GM12878 (cell line): ENCODE measurements at regions of chr14 and their contacts with region 1.

Region 1: DNA sequence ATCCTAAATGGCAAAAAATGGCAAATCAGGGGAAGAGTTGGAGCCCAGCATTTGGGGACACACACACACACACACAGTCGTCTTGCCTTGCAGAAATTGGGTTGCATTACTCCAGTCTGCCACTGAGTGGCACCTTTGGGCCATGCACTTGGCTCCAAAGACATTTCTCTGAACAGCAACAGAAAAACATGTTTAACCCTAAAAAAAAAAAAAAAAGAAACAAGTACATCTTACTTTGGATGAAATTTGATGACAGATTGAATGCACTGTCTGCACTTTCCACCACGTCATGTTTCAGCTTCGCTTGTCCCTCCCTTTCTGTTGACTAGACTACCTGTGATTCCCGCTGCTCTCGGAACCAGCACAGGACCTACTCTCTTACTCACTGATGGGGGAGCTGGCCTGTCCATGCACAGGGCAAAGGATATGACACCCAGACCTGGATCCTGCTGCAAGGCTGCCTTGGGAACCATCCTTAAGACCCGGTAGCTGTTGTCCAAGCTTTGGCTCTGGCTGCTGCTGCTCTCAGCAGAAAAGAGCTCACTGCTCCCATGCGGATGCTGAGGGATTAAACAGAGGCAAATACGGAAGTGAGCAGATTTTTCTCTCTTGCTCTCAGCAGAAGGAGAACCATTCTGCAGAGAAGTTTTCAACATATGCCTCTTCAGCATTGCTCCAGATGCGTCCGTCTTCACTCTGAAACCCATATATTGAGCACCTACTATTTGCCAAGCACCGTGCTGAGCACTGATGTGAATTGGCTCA is 376.8 kb downstream of the DPF3 start:
- DNase-seq: peak; percentile 53
- ATAC-seq: peak; percentile 46
- H3K4me3 ChIP-seq: no peak overlapping the region
- H3K27ac ChIP-seq: peak overlapping the region; percentile 86; the same call in 1 of the 2 replicates
- H3K4me1 ChIP-seq: peaks cover 56% of the 10 kb centered on the region
- H3K27me3 ChIP-seq: no peaks in the 10 kb centered on the region
- CTCF ChIP-seq: peak; percentile 86 to 95 (median 93)
- EP300 ChIP-seq: no peak
- POLR2A ChIP-seq: no peak
- RAD21 ChIP-seq: peak; percentile 97

Region 2: DNA sequence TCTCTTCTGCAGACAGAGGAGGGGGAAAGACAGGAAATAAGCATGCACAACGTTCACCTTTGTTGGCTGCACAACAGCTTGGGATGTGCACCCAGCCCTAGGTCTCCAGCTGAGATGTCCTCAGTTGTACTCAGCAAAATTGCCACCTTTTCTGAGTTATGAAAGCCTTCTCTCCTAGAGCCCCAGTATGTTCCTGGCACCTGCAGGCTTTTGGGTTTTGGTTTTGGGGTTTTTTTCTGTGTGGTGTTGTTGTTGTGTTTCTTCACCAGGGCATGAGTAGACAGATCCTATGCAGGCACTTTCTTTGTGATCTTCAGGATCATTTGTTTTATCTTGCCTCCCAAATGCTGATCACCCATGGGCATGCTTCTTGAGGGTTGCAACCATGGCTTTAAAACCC is 86.7 kb before region 1 on chr14:
- CTCF ChIA-PET with region 1: no interaction called
- POLR2A ChIA-PET with region 1: no interaction called
- RAD21 ChIA-PET with region 1: no interaction called
- SMC1A ChIA-PET with region 1: no interaction called
- in situ Hi-C with region 1: no loop called
- intact Hi-C with region 1: no loop called
- DNase-seq: no peak
- ATAC-seq: no peak
- H3K4me3 ChIP-seq: no peak overlapping the region
- H3K27ac ChIP-seq: no peak overlapping the region
- H3K4me1 ChIP-seq: no peaks in the 10 kb centered on the region
- H3K27me3 ChIP-seq: no peaks in the 10 kb centered on the region
- CTCF ChIP-seq: no peak
- EP300 ChIP-seq: no peak
- POLR2A ChIP-seq: no peak
- RAD21 ChIP-seq: no peak

Region 3: GRCh38 chr14:72495664-72496264 is 21.4 kb before region 1 on chr14:
- CTCF ChIA-PET with region 1: interaction called, 35 read pairs
- POLR2A ChIA-PET with region 1: no interaction called
- RAD21 ChIA-PET with region 1: interaction called, 3 read pairs
- SMC1A ChIA-PET with region 1: interaction called, 9 read pairs
- in situ Hi-C with region 1: no loop called
- intact Hi-C with region 1: no loop called
- DNase-seq: no peak
- ATAC-seq: no peak
- H3K4me3 ChIP-seq: no peak overlapping the region
- H3K27ac ChIP-seq: no peak overlapping the region
- H3K4me1 ChIP-seq: peaks cover 5% of the 10 kb centered on the region; the same call in 1 of the 2 replicates
- H3K27me3 ChIP-seq: no peaks in the 10 kb centered on the region
- CTCF ChIP-seq: no peak
- EP300 ChIP-seq: no peak
- POLR2A ChIP-seq: no peak
- RAD21 ChIP-seq: no peak

Region 4: GRCh38 chr14:72638021-72638420 is 120.9 kb after region 1 on chr14:
- CTCF ChIA-PET with region 1: no interaction called
- POLR2A ChIA-PET with region 1: no interaction called
- RAD21 ChIA-PET with region 1: interaction called, 5 read pairs
- SMC1A ChIA-PET with region 1: interaction called, 10 read pairs
- in situ Hi-C with region 1: no loop called
- intact Hi-C with region 1: loop called (anchors 2 kb)
- DNase-seq: no peak
- ATAC-seq: no peak
- H3K4me3 ChIP-seq: no peak overlapping the region
- H3K27ac ChIP-seq: no peak overlapping the region
- H3K4me1 ChIP-seq: peaks cover 5% of the 10 kb centered on the region
- H3K27me3 ChIP-seq: peaks cover 0 to 2% of the 10 kb centered on the region in 2 experiments; a peak in 1 of 4 replicates
- CTCF ChIP-seq: no peak
- EP300 ChIP-seq: no peak
- POLR2A ChIP-seq: no peak
- RAD21 ChIP-seq: no peak

Region 5: DNA sequence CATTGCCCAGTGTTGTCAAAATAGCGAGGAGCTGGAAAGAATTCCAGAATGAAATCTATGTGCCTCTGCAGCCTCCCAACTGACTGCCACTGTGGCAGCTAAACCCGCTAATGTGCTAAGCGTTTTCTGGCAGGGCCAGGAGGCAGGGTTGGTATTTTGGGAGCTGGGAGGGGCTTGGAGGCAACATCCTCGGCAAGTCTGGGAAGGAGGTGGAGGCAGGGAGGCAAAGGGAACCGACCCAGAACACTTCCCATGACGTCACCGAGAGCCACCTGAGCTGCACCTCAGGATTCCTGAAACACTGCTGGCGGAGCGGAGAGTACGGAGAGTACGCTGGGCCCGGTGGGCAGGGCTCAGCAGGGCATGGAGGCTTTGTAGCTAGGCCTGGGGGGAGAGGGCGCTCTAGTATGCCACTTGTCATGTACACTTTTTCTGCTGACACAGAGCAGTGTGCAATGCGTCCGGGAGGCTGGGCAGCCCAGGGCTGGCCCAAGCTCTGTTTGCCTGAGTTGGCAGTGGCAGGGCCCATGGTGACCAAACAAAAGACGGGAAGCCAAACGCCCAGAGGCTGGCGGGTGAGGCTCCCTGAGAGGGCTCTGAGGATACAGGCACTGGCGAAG is 295.3 kb after region 1 on chr14:
- CTCF ChIA-PET with region 1: interaction called, 3 read pairs
- POLR2A ChIA-PET with region 1: no interaction called
- RAD21 ChIA-PET with region 1: interaction called, 3 read pairs
- SMC1A ChIA-PET with region 1: no interaction called
- in situ Hi-C with region 1: no loop called
- intact Hi-C with region 1: loop called (anchors 10 kb)
- DNase-seq: no peak
- ATAC-seq: no peak
- H3K4me3 ChIP-seq: no peak overlapping the region
- H3K27ac ChIP-seq: no peak overlapping the region
- H3K4me1 ChIP-seq: peaks cover 6% of the 10 kb centered on the region
- H3K27me3 ChIP-seq: no peaks in the 10 kb centered on the region
- CTCF ChIP-seq: no peak
- EP300 ChIP-seq: no peak
- POLR2A ChIP-seq: no peak
- RAD21 ChIP-seq: no peak

Region 6: GRCh38 chr14:72836085-72836484 is 319.0 kb after region 1 on chr14:
- CTCF ChIA-PET with region 1: no interaction called
- POLR2A ChIA-PET with region 1: no interaction called
- RAD21 ChIA-PET with region 1: no interaction called
- SMC1A ChIA-PET with region 1: no interaction called
- in situ Hi-C with region 1: no loop called
- intact Hi-C with region 1: no loop called
- DNase-seq: no peak
- ATAC-seq: no peak
- H3K4me3 ChIP-seq: no peak overlapping the region
- H3K27ac ChIP-seq: no peak overlapping the region
- H3K4me1 ChIP-seq: no peaks in the 10 kb centered on the region
- H3K27me3 ChIP-seq: no peaks in the 10 kb centered on the region
- CTCF ChIP-seq: no peak
- EP300 ChIP-seq: no peak
- POLR2A ChIP-seq: no peak
- RAD21 ChIP-seq: no peak

Region 7: DNA sequence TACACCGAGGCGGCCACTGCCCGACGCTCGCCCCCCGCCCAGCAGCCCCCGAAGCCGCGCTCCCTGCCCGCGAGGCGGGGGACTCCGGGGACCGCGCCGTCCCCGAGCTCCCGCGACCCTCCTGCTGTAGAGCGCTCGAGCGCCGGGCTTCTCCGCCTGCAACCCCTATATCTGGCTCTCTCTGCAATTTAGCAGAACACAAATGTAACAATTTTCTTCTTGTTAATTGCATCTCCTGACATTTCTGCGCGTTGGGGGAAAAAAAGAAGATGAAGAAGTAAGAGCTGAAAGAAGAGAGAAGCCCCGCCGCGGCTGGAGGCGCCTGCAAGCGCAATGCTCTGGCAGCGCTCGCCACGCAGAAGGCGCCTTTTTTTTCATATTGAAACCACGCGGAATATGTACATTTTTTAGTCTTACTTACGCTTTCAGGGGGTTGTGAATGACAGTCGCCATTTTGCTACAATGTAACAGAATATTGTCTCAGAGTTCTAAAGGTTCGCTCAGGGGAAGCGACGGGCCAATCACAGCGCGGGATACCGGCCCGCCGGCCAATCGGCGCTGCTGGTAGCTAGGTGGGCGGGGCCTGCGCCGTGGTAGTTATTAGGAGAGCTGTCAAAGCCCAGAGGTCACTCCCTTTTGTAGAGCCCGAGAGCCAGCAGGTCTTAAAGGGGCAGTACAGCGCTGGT is 376.7 kb after region 1 on chr14 and contains the start of gene DPF3:
- CTCF ChIA-PET with region 1: interaction called, 520 read pairs
- POLR2A ChIA-PET with region 1: no interaction called
- RAD21 ChIA-PET with region 1: interaction called, 31 read pairs
- SMC1A ChIA-PET with region 1: interaction called, 18 read pairs
- in situ Hi-C with region 1: no loop called
- intact Hi-C with region 1: no loop called
- DNase-seq: peak; percentile 75
- ATAC-seq: peak; percentile 99
- H3K4me3 ChIP-seq: peak within 1 kb of the TSS; percentile 98
- H3K27ac ChIP-seq: no peak within 1 kb of the TSS
- H3K4me1 ChIP-seq: peaks cover 5% of the 10 kb centered on the region; the same call in 1 of the 2 replicates
- H3K27me3 ChIP-seq: no peaks in the 10 kb centered on the region
- CTCF ChIP-seq: no peak
- EP300 ChIP-seq: no peak
- POLR2A ChIP-seq: no peak
- RAD21 ChIP-seq: 0 out of 2 replicates have a peak, but pooled peaks have one; percentile 3
- polyA plus RNA-seq, gene DPF3: 0.69 to 0.87 TPM

Region 8: DNA sequence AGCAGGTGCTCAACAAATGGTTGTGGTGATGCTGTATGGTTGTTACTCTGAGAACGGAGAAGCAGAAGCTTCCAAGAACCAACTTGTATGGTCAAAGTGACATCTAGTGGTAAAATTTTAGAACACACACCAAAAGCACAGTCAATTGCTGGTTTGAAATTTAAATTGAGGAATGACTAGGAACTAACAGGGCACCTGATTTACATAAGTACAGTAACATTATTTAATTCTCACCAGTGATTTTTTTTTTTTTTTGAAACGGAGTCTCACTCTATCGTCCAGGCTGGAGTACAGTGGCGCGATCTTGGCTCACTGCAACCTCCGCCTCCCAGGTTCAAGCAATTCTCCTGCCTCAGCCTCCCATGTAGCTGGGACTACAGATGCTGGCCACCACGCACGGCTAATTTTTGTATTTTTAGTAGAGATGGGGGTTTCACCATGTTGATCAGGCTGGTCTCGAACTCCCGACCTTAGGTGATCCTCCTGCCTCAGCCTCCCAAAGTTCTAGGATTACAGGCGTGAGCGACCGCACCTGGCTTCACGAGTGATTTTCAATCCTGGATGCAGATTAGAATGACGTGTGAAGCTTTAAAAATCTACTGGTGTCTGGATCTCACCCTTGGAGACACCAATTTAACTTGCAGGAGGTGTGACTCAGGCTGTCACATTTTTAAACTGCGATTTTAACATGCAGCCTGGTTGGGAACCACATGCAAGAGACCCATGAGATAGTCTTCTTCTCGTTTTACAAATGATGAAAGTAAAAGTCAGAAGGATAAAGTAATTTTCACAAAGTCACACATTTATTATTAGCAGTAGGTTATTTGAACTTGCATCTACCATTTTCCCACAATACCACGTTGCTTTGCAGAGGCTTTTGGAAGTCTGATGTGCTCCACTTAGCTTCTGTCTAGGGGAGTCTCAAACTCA is 955.3 kb after region 1 on chr14:
- CTCF ChIA-PET with region 1: interaction called, 8 read pairs
- POLR2A ChIA-PET with region 1: no interaction called
- RAD21 ChIA-PET with region 1: interaction called, 8 read pairs
- SMC1A ChIA-PET with region 1: interaction called, 3 read pairs
- in situ Hi-C with region 1: loop called (anchors 10 kb)
- intact Hi-C with region 1: no loop called
- DNase-seq: peak; percentile 57
- ATAC-seq: peak; percentile 86
- H3K4me3 ChIP-seq: no peak overlapping the region
- H3K27ac ChIP-seq: peak overlapping the region; percentile 29; the same call in 1 of the 2 replicates
- H3K4me1 ChIP-seq: peaks cover 15% of the 10 kb centered on the region
- H3K27me3 ChIP-seq: no peaks in the 10 kb centered on the region
- CTCF ChIP-seq: peak; percentile 56 to 82 (median 65); a peak in 5 of 6 replicates
- EP300 ChIP-seq: peak in 1 of 2 experiments; percentile 39; a peak in 1 of 4 replicates
- POLR2A ChIP-seq: no peak
- RAD21 ChIP-seq: peak; percentile 99